ENCODE measurements at regions of chr1 and their contacts with region 1.

Region 1: GRCh38 chr1:1187938-1188337 is 14.3 kb downstream of the TTLL10 start:
- DNase-seq: peak; percentile 78
- ATAC-seq: peak; percentile 61
- H3K4me3 ChIP-seq: no peak overlapping the region
- H3K27ac ChIP-seq: no peak overlapping the region
- H3K4me1 ChIP-seq: no peaks in the 10 kb centered on the region
- H3K27me3 ChIP-seq: no peaks in the 10 kb centered on the region
- CTCF ChIP-seq: no peak
- POLR2A ChIP-seq: no peak
- RAD21 ChIP-seq: no peak

Region 2: DNA sequence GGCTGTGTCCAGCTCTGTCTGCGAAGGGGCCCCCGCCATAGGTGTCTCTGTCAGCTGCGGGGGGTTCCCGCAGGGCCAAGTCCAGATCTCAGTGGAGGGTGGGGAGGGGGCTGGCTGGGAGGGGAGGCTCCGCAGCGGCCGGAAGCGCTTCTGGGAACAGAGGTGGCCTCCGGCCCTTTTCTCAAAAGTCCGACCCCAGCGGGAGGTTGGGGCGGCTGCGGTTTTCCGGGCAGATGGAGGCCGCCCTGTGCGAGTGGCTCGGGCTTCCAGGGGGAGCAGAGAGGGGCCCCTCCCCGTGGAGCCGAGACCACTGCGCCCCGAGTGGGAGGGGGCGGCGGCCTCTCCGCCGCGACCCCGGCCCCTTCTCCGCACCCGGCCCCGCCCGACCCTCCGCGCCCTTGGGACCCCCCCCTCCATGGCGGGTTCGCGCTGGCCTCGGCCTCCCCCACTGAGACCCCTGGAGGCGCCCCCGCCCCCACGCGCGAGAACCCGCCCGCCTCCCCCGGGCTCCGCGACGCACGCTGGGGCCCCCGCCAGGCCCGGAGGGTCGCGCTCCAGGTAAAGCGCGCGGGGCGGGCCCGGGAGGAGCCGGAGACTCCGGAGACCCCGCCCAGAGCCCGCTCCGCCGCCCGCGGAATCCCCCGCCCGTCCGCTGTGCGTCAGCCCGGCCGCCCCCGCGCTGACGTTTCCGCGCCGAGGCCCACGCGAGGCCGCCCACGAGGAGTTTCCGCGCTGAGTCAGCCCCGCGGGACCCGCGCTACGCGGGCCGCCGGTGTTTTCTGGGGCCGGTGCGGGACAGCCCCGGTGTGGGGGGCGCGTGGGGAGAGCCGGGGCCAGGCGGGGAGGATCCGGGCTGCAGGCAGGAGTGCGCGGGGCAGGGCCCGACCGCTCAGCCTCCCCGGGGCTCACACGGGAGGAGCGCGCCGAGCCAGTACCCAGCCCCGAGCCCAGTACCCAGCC is 13.2 kb after region 1 on chr1:
- CTCF ChIA-PET with region 1: no interaction called
- POLR2A ChIA-PET with region 1: no interaction called
- dilution Hi-C with region 1: no loop called
- in situ Hi-C with region 1: no loop called
- intact Hi-C with region 1: loop called (anchors 1 kb)
- DNase-seq: peak; percentile 63
- ATAC-seq: peak; percentile 88
- H3K4me3 ChIP-seq: peak overlapping the region; percentile 71
- H3K27ac ChIP-seq: peak overlapping the region; percentile 61; the same call in 1 of the 2 replicates
- H3K4me1 ChIP-seq: no peaks in the 10 kb centered on the region
- H3K27me3 ChIP-seq: no peaks in the 10 kb centered on the region; the same call in 1 of the 2 replicates
- CTCF ChIP-seq: no peak
- POLR2A ChIP-seq: peak; percentile 3; the same call in 1 of the 2 replicates
- RAD21 ChIP-seq: no peak

Measured in IMR-90 (cell line).